ENCODE measurements at regions of chr4 and their contacts with region 1.

Region 1: GRCh38 chr4:134132079-134132764 is 69.4 kb downstream of the PABPC4L start:
- DNase-seq: peak; percentile 45
- ATAC-seq: peak; percentile 70
- H3K4me3 ChIP-seq: no peak overlapping the region
- H3K27ac ChIP-seq: no peak overlapping the region
- H3K4me1 ChIP-seq: no peaks in the 10 kb centered on the region
- H3K27me3 ChIP-seq: no peaks in the 10 kb centered on the region
- CTCF ChIP-seq: peak; percentile 47

Region 2: GRCh38 chr4:133555671-133556070 is 576.6 kb before region 1 on chr4:
- CTCF ChIA-PET with region 1: interaction called, 15 read pairs
- POLR2A ChIA-PET with region 1: no interaction called
- intact Hi-C with region 1: no loop called
- DNase-seq: no peak
- ATAC-seq: no peak
- H3K4me3 ChIP-seq: no peak overlapping the region
- H3K27ac ChIP-seq: no peak overlapping the region
- H3K4me1 ChIP-seq: no peaks in the 10 kb centered on the region
- H3K27me3 ChIP-seq: no peaks in the 10 kb centered on the region
- CTCF ChIP-seq: no peak

Region 3: GRCh38 chr4:134160211-134160610 is 28.0 kb after region 1 on chr4:
- CTCF ChIA-PET with region 1: no interaction called
- POLR2A ChIA-PET with region 1: no interaction called
- intact Hi-C with region 1: no loop called
- DNase-seq: no peak
- ATAC-seq: no peak
- H3K4me3 ChIP-seq: no peak overlapping the region
- H3K27ac ChIP-seq: no peak overlapping the region
- H3K4me1 ChIP-seq: no peaks in the 10 kb centered on the region
- H3K27me3 ChIP-seq: no peaks in the 10 kb centered on the region
- CTCF ChIP-seq: no peak